GM12878 (cell line): ENCODE measurements at regions of chr2 and their contacts with region 1.

Region 1: GRCh38 chr2:6865346-6866274 is at the start of gene CMPK2:
- DNase-seq: peak; percentile 33
- ATAC-seq: peak; percentile 87
- H3K4me3 ChIP-seq: peak within 1 kb of the TSS; percentile 77
- H3K27ac ChIP-seq: peak within 1 kb of the TSS; percentile 68
- H3K4me1 ChIP-seq: peaks cover 12% of the 10 kb centered on the region; the same call in 1 of the 2 replicates
- H3K27me3 ChIP-seq: no peaks in the 10 kb centered on the region; a peak in 2 of 4 replicates
- CTCF ChIP-seq: peak; percentile 16 to 38 (median 28); a peak in 2 of 6 replicates
- EP300 ChIP-seq: no peak
- POLR2A ChIP-seq: peak; percentile 73
- RAD21 ChIP-seq: no peak
- polyA plus RNA-seq, gene CMPK2: 1.9 to 2.3 TPM

Region 2: DNA sequence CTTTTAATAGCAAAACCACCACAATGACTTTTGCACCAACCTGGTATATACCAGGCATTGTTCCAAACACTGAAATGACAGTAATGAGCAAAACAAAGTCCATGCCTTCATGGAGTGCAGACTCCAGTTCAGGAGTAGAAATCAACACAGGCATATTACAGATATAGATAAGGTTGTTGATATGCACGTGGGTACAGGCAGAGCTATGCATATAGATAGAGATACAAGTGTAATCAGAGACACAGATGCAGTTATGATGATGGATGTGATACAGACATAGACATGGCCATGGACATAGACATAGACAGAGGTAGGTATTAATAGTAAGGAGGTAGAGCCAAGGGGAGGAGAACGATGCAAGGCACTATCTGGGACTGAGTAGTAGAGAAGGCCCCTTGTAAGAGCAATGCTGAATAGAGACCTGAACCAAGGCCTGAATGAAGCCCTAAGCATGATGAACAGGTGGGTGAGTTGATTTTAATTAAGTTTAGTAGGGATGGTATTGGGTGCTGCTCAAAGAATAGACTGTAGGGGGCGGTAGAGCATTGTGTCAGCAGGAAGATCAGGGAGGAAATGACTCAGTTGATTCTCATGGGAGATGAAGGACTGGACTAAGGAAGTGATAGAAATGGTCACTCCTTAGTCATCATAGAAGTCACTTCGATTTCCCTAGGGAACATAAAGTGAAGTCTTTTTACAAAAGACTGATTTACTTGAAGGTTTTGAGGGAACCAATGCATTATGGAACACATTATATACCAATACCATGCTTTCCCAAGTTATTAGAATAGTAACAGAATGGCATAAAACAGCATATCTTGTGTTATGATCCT is 39.3 kb before region 1 on chr2:
- CTCF ChIA-PET with region 1: interaction called, 9 read pairs
- POLR2A ChIA-PET with region 1: no interaction called
- RAD21 ChIA-PET with region 1: no interaction called
- SMC1A ChIA-PET with region 1: interaction called, 4 read pairs
- in situ Hi-C with region 1: no loop called
- intact Hi-C with region 1: loop called (anchors 2 kb)
- DNase-seq: peak; percentile 58
- ATAC-seq: peak; percentile 97
- H3K4me3 ChIP-seq: no peak overlapping the region
- H3K27ac ChIP-seq: no peak overlapping the region
- H3K4me1 ChIP-seq: no peaks in the 10 kb centered on the region
- H3K27me3 ChIP-seq: no peaks in the 10 kb centered on the region
- CTCF ChIP-seq: peak; percentile 67 to 86 (median 70)
- EP300 ChIP-seq: peak in 1 of 2 experiments; percentile 19; a peak in 1 of 4 replicates
- POLR2A ChIP-seq: no peak
- RAD21 ChIP-seq: peak; percentile 74

Region 3: GRCh38 chr2:6877402-6878304 is 12.0 kb after region 1 on chr2 and contains the start of gene RSAD2:
- CTCF ChIA-PET with region 1: interaction called, 31 read pairs
- POLR2A ChIA-PET with region 1: interaction called, 6 read pairs
- RAD21 ChIA-PET with region 1: interaction called, 5 read pairs
- SMC1A ChIA-PET with region 1: interaction called, 25 read pairs
- in situ Hi-C with region 1: no loop called
- intact Hi-C with region 1: no loop called
- DNase-seq: peak; percentile 15
- ATAC-seq: peak; percentile 84
- H3K4me3 ChIP-seq: peak within 1 kb of the TSS; percentile 39; the same call in 1 of the 2 replicates
- H3K27ac ChIP-seq: no peak within 1 kb of the TSS
- H3K4me1 ChIP-seq: peaks cover 13% of the 10 kb centered on the region
- H3K27me3 ChIP-seq: peaks cover 0 to 2% of the 10 kb centered on the region in 2 experiments; a peak in 1 of 4 replicates
- CTCF ChIP-seq: no peak
- EP300 ChIP-seq: no peak
- POLR2A ChIP-seq: no peak
- RAD21 ChIP-seq: no peak
- polyA plus RNA-seq, gene RSAD2: 0.40 to 0.56 TPM